Activated CD4-positive, alpha-beta T cell treated with anti-CD3 and anti-CD28 coated beads for 36 hours (primary cell): ENCODE measurements at regions of chr9 and their contacts with region 1.

Region 1: DNA sequence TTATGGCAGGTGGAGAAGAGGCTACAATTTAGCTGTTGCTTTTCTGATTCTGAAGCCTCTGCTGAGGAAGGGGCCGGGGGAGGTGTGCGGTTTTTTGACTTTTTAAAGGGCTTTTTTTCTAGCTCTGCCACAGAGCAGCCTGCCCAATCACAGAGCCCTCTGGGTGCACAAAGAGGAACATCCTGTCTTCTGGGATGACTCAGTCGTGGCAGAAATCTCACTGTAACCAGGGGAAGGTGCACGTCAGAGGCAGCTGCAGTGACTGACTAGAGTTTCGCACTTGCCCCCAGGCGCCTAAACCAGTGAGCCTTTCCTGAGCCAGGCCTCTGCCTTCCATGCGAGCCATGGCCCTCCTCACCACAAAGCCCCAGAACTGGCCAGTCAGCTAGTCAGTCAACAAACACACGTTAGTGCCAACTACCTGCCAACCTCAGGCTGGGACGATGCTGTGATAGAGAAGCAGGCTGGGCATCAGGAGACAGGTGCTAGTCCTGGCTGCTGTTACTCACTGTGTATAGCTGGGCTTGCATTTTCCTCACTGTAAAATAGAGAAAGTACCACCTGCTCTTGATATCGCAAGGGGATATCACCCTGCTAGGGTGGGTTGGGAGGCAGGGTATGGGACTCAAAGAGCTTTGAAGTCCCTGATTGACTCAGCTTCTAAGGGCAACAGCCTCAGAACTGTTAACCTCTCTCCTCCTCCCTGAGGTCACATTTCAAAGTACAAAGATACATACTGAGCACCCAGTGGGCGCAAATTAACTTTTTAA is 2.2 kb downstream of the AKNA start:
- DNase-seq: peak; percentile 94
- ATAC-seq: peak; percentile 79
- H3K4me3 Mint-ChIP-seq: peak overlapping the region; percentile 99
- H3K27ac Mint-ChIP-seq: peak overlapping the region; percentile 99
- H3K4me1 Mint-ChIP-seq: peaks cover 58% of the 10 kb centered on the region
- H3K27me3 Mint-ChIP-seq: no peaks in the 10 kb centered on the region

Region 2: DNA sequence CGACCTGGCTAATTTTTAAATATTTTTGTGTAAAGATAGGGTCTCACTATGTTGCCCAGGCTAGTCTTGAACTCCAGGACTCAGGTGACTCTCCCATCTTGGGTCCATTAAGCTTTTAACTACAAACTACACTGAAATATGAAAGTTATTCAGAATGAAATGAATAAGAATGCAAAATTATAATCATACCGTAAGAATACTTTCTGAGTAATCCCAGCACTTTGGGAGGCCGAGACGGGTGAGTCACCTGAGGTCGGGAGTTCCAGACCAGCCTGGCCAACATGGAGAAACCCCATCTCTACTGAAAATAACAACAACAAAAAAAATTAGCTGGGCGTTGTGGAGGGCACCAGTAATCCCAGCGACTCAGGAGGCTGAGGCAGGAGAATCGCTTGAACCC is 63.8 kb before region 1 on chr9:
- CTCF ChIA-PET with region 1: no interaction called
- POLR2A ChIA-PET with region 1: no interaction called
- intact Hi-C with region 1: loop called in 1 of 2 experiments (anchors 2 kb)
- DNase-seq: peak; percentile 76
- ATAC-seq: peak; percentile 57
- H3K4me3 Mint-ChIP-seq: no peak overlapping the region
- H3K27ac Mint-ChIP-seq: peak overlapping the region; percentile 25
- H3K4me1 Mint-ChIP-seq: peaks cover 20% of the 10 kb centered on the region
- H3K27me3 Mint-ChIP-seq: peaks cover 4% of the 10 kb centered on the region

Region 3: DNA sequence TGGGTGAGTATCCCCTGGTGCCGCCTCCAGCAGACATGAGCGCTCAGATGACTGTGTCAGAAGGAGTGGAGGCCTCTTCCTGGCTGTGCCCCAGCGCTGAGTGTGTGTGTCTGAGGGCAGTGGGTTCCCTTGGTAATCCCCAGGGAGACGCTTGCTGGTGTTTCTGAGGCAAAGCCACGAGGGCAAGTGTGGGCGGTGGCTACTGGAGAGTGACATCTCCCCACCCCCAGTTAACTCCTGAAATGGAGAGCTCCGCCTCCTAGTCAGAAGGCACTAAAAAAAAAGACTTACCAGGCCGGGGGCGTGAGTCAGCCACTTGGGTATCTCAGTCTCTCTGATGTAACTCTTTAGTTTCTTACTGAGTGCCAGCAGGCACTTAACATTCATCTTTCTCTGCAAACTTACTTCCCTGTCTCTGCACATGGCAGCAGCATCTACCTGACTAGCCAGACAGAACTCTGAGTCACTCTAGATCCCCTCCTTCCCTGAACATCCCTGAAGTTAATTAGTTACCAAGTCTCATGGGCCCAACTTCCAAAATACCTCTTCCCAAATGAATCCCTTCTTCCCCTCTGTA is 36.6 kb before region 1 on chr9:
- CTCF ChIA-PET with region 1: interaction called, 13 read pairs
- POLR2A ChIA-PET with region 1: interaction called, 16 read pairs
- intact Hi-C with region 1: loop called (anchors 1 kb)
- DNase-seq: peak; percentile 97
- ATAC-seq: peak; percentile 88
- H3K4me3 Mint-ChIP-seq: peak overlapping the region; percentile 47
- H3K27ac Mint-ChIP-seq: peak overlapping the region; percentile 97
- H3K4me1 Mint-ChIP-seq: peaks cover 65% of the 10 kb centered on the region
- H3K27me3 Mint-ChIP-seq: no peaks in the 10 kb centered on the region

Region 4: DNA sequence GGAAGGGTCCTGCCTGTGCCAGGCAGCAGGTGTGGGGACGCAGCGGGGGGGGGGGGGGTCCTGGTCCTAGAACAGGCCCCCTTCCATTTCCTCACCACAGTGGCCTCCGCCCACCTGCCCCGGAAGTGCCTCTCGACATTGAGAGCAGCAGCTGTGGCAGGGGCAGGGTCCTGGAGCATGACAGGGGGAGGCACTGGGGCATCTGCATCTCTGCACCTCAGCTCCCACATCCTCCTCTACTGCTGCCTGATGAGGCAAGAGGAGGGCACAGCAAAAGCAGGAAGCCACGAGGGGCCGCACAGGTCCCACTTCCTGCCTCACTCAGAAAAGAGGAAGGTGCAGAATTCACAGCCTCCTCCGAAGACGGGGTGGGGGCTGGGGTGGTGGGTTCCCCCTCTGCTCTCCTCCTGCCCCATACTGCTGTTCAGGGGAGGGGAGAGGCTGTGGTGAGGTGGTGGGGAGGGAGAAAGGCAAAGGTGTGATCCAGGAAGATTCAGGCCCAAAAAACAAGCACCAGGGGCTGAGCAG is 12.6 kb before region 1 on chr9:
- CTCF ChIA-PET with region 1: interaction called, 12 read pairs
- POLR2A ChIA-PET with region 1: interaction called, 22 read pairs
- intact Hi-C with region 1: loop called (anchors 1 kb)
- DNase-seq: peak; percentile 91
- ATAC-seq: peak; percentile 85
- H3K4me3 Mint-ChIP-seq: peak overlapping the region; percentile 64
- H3K27ac Mint-ChIP-seq: peak overlapping the region; percentile 89
- H3K4me1 Mint-ChIP-seq: peaks cover 84% of the 10 kb centered on the region
- H3K27me3 Mint-ChIP-seq: no peaks in the 10 kb centered on the region

Region 5: GRCh38 chr9:114587385-114588202 is 202.0 kb after region 1 on chr9 and contains the start of gene ATP6V1G1:
- CTCF ChIA-PET with region 1: interaction called, 3 read pairs
- POLR2A ChIA-PET with region 1: interaction called, 4 read pairs
- intact Hi-C with region 1: loop called in 1 of 2 experiments (anchors 1 kb)
- DNase-seq: peak; percentile 100
- ATAC-seq: peak; percentile 96
- H3K4me3 Mint-ChIP-seq: peak within 1 kb of the TSS; percentile 99
- H3K27ac Mint-ChIP-seq: peak within 1 kb of the TSS; percentile 100
- H3K4me1 Mint-ChIP-seq: peaks cover 44% of the 10 kb centered on the region
- H3K27me3 Mint-ChIP-seq: no peaks in the 10 kb centered on the region
- total RNA-seq, gene ATP6V1G1: 33.8 to 37.7 TPM

Region 6: GRCh38 chr9:114691046-114691955 is 305.7 kb after region 1 on chr9:
- CTCF ChIA-PET with region 1: interaction called, 5 read pairs
- POLR2A ChIA-PET with region 1: interaction called, 4 read pairs
- intact Hi-C with region 1: loop called in 1 of 2 experiments (anchors 1 kb)
- DNase-seq: peak; percentile 87
- ATAC-seq: peak; percentile 75
- H3K4me3 Mint-ChIP-seq: peak overlapping the region; percentile 48
- H3K27ac Mint-ChIP-seq: peak overlapping the region; percentile 98
- H3K4me1 Mint-ChIP-seq: peaks cover 94% of the 10 kb centered on the region
- H3K27me3 Mint-ChIP-seq: no peaks in the 10 kb centered on the region

Region 7: DNA sequence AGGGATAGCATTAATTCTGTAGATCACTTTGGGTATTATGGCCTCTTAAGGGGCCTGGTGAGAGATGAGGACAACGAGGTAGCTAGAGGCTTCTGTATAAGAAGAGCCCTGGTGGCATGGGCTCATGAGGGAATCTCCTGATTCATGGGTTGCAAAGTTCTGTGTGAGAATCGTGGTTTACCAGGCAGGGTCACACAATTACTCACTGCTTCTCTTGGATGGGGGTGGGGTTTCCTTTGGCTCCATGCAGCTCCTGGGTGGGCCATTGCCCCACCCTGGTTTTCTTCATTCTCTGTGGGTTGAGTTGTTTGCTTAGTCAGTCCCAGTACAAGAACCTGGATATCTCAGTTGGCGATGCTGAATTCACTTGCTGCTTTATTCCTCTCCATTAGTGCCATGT is 451.2 kb after region 1 on chr9:
- CTCF ChIA-PET with region 1: no interaction called
- POLR2A ChIA-PET with region 1: no interaction called
- intact Hi-C with region 1: no loop called
- DNase-seq: peak; percentile 45
- ATAC-seq: peak; percentile 89
- H3K4me3 Mint-ChIP-seq: no peak overlapping the region
- H3K27ac Mint-ChIP-seq: no peak overlapping the region
- H3K4me1 Mint-ChIP-seq: peaks cover 9% of the 10 kb centered on the region
- H3K27me3 Mint-ChIP-seq: no peaks in the 10 kb centered on the region

Region 8: DNA sequence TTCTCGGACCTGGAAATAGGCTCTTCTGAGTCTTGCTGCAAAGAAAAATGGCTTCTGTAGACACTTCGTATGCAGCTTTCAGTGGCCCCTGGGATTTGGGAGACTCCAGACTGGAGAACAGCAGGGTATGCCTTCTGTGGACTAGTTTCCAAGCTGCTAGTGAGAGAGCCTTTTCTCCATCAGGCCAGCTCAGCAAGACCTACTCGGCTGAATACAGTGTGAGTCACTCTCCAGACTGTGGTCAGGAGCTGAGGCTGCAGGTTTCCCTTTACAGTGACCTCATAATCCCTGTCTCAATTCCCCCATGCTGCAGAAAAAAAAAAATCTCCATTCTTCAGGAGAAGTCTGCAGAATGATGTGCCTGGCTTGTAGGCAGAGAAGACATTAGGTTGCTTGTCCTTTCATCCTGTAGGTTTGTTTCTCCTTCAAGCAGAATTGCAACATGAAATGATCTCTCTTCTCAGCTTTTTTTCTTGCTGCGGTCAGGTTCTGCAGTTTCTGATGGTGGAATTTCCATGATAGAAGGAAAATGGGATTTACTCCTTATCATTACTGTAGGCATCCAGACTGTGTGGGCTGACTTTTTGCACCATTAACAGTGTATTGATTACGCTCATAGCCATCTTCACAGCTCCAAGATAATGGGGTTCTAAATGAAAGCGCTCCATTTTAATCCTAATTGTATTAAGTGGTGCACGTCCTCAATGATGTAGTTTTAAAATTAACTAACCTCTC is 623.1 kb after region 1 on chr9:
- CTCF ChIA-PET with region 1: interaction called, 3 read pairs
- POLR2A ChIA-PET with region 1: no interaction called
- intact Hi-C with region 1: loop called in 1 of 2 experiments (anchors 10 kb)
- DNase-seq: peak; percentile 62
- ATAC-seq: peak; percentile 45
- H3K4me3 Mint-ChIP-seq: no peak overlapping the region
- H3K27ac Mint-ChIP-seq: peak overlapping the region; percentile 11
- H3K4me1 Mint-ChIP-seq: peaks cover 85% of the 10 kb centered on the region
- H3K27me3 Mint-ChIP-seq: no peaks in the 10 kb centered on the region